Activated CD4-positive, alpha-beta memory T cell treated with anti-CD3 and anti-CD28 coated beads for 36 hours (primary cell): ENCODE measurements at regions of chr3 and their contacts with region 1.

Region 1: GRCh38 chr3:59386165-59386564 is 336.3 kb upstream of the CFAP20DC start:
- DNase-seq: no peak
- H3K4me3 Mint-ChIP-seq: peak overlapping the region; percentile 24
- H3K27ac Mint-ChIP-seq: peak overlapping the region; percentile 76
- H3K4me1 Mint-ChIP-seq: peaks cover 72% of the 10 kb centered on the region
- H3K27me3 Mint-ChIP-seq: peaks cover 2% of the 10 kb centered on the region

Region 2: GRCh38 chr3:59027607-59028006 is 358.6 kb before region 1 on chr3:
- CTCF ChIA-PET with region 1: no interaction called
- POLR2A ChIA-PET with region 1: no interaction called
- intact Hi-C with region 1: no loop called
- DNase-seq: no peak
- H3K4me3 Mint-ChIP-seq: no peak overlapping the region
- H3K27ac Mint-ChIP-seq: no peak overlapping the region
- H3K4me1 Mint-ChIP-seq: no peaks in the 10 kb centered on the region
- H3K27me3 Mint-ChIP-seq: peaks cover 2% of the 10 kb centered on the region

Region 3: GRCh38 chr3:59235634-59236012 is 150.5 kb before region 1 on chr3:
- CTCF ChIA-PET with region 1: no interaction called
- POLR2A ChIA-PET with region 1: interaction called, 4 read pairs
- intact Hi-C with region 1: loop called (anchors 2 kb)
- DNase-seq: peak; percentile 71
- H3K4me3 Mint-ChIP-seq: no peak overlapping the region
- H3K27ac Mint-ChIP-seq: no peak overlapping the region
- H3K4me1 Mint-ChIP-seq: peaks cover 19% of the 10 kb centered on the region
- H3K27me3 Mint-ChIP-seq: peaks cover 15% of the 10 kb centered on the region

Region 4: DNA sequence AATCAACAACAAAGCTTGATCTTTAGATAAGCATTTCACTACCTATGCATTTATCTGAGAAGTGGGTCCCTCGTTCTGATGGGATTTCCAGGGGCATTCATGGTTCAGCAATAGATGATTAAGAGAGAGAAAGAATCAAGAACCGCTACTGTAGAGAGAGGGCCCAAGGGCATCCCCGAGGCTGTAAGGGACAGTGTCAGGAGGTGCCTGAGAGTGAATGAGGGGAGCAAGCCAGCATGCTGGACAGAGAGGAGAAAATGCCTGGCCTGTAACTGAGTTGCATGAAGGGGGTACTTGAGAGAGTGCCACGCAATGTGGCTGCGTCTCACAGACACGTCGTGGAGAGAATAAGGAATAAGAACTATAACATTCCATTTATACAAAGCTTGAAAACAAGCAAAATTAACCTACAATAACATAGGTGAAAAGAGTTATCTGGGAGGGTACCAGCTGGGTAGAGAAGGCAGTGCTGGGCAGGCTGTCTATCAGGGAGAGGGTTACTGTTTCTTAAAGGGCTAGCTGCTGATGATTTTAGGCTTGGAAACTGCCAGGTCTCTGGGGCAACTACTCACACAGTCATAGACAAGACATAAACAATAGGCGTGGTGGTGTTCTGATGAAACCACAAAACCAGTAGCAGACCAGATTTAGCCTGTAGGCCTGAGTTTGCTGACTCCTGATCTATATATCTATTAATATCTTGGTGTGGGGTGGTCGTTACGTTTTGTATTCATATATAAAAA is 38.3 kb after region 1 on chr3:
- CTCF ChIA-PET with region 1: interaction called, 10 read pairs
- POLR2A ChIA-PET with region 1: interaction called, 7 read pairs
- intact Hi-C with region 1: loop called (anchors 1 kb)
- DNase-seq: peak; percentile 28
- H3K4me3 Mint-ChIP-seq: no peak overlapping the region
- H3K27ac Mint-ChIP-seq: no peak overlapping the region
- H3K4me1 Mint-ChIP-seq: peaks cover 69% of the 10 kb centered on the region
- H3K27me3 Mint-ChIP-seq: peaks cover 14% of the 10 kb centered on the region

Region 5: DNA sequence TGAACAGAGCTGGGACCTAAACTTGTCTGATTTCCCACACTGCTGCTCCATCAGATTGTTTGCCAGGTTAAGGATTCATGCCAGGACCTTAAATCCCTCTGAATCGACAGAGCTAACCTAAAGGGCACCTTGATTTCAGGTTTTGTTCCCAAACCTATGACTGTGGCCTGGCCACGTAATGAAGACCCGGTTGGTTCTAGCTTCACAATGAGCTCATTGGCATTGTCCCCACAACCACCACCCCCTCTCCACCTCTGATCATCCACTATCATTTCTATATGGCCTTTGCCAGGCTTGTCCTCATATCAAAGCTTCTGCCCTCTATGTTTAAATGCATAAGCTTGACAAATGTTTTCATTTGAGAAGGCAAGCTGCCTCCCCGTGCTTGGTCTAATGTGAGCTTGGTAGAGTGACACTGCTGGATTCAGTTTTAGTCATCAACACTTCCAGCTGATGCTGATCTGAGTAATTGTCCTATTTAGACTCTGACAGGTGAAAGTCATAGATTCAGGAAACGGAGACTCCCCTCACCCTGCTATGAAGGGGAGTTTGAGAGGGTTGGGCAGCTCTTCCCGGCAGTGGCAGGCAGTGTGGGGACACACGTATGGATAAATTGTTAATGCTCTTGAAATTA is 70.8 kb after region 1 on chr3:
- CTCF ChIA-PET with region 1: interaction called, 3 read pairs
- POLR2A ChIA-PET with region 1: no interaction called
- intact Hi-C with region 1: loop called (anchors 1 kb)
- DNase-seq: peak; percentile 63
- H3K4me3 Mint-ChIP-seq: no peak overlapping the region
- H3K27ac Mint-ChIP-seq: peak overlapping the region; percentile 10
- H3K4me1 Mint-ChIP-seq: peaks cover 26% of the 10 kb centered on the region
- H3K27me3 Mint-ChIP-seq: no peaks in the 10 kb centered on the region

Region 6: DNA sequence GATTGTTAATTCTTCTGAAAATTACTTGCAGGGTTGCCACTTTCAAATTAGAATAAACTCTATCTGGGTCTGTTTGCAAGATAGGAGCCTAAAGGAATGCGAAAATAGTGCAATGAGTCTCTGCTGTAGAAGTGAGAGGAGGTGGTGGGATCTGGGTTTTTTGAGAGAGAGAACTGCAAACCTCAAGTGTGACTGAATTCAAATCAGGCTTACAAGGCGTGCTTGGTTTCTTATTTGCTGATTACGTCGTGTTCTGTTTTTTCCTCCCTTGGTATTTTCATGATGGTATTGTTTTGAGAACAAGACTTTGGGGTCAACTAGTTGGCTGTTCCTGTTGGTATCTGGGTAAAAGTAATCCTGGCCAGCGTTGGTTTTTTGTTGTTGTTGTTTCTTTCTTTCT is 154.5 kb after region 1 on chr3:
- CTCF ChIA-PET with region 1: no interaction called
- POLR2A ChIA-PET with region 1: no interaction called
- intact Hi-C with region 1: loop called (anchors 5 kb)
- DNase-seq: peak; percentile 11
- H3K4me3 Mint-ChIP-seq: no peak overlapping the region
- H3K27ac Mint-ChIP-seq: peak overlapping the region; percentile 42
- H3K4me1 Mint-ChIP-seq: peaks cover 26% of the 10 kb centered on the region
- H3K27me3 Mint-ChIP-seq: peaks cover 3% of the 10 kb centered on the region

Region 7: GRCh38 chr3:59759298-59760031 is 373.3 kb after region 1 on chr3:
- CTCF ChIA-PET with region 1: no interaction called
- POLR2A ChIA-PET with region 1: no interaction called
- intact Hi-C with region 1: loop called (anchors 10 kb)
- DNase-seq: peak; percentile 73
- H3K4me3 Mint-ChIP-seq: no peak overlapping the region
- H3K27ac Mint-ChIP-seq: no peak overlapping the region
- H3K4me1 Mint-ChIP-seq: peaks cover 43% of the 10 kb centered on the region
- H3K27me3 Mint-ChIP-seq: no peaks in the 10 kb centered on the region

Region 8: DNA sequence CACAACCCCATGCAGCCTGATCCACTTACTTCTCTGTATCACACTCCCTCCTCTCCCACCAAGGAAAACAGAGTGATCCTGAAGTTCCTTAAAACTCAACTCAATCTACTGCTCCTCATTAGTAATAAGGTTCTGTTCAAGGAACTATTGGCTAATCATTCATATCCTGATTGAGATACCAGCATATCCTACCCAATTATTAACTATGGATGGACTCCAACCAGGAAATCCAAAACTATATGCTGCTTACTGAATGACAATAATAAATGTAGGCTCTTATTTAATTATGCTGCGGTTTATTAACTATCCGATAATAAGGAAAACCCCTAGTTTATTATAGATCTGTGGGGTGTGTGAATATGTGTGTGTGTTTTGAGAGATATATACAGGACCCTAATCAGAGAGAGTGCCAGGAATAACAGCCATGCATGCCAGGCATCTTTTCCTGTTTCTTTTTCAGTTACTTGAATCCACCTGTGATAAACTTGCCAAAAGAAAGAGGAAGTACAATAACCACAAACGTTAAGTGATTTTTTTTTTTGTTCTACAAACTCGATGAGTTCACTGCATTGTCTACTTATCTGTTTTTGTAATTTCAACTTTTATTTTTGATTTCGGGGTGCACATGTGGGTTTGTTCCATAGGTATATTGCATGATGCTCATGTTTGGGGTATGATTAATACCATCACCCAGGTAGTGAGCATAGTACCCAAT is 695.4 kb after region 1 on chr3:
- CTCF ChIA-PET with region 1: no interaction called
- POLR2A ChIA-PET with region 1: no interaction called
- intact Hi-C with region 1: loop called (anchors 2 kb)
- DNase-seq: no peak
- H3K4me3 Mint-ChIP-seq: peak overlapping the region; percentile 42
- H3K27ac Mint-ChIP-seq: peak overlapping the region; percentile 79
- H3K4me1 Mint-ChIP-seq: peaks cover 61% of the 10 kb centered on the region
- H3K27me3 Mint-ChIP-seq: no peaks in the 10 kb centered on the region